PC-3 (cell line): ENCODE measurements at regions of chr14 and their contacts with region 1.

Region 1: GRCh38 chr14:36941783-36942521 is 230.5 kb downstream of the SLC25A21 start:
- DNase-seq: peak; percentile 88
- ATAC-seq: peak; percentile 57
- H3K4me3 ChIP-seq: no peak overlapping the region
- H3K27ac ChIP-seq: peak overlapping the region; percentile 89
- H3K4me1 ChIP-seq: peaks cover 40% of the 10 kb centered on the region
- H3K27me3 ChIP-seq: no peaks in the 10 kb centered on the region
- CTCF ChIP-seq: peak; percentile 97

Region 2: DNA sequence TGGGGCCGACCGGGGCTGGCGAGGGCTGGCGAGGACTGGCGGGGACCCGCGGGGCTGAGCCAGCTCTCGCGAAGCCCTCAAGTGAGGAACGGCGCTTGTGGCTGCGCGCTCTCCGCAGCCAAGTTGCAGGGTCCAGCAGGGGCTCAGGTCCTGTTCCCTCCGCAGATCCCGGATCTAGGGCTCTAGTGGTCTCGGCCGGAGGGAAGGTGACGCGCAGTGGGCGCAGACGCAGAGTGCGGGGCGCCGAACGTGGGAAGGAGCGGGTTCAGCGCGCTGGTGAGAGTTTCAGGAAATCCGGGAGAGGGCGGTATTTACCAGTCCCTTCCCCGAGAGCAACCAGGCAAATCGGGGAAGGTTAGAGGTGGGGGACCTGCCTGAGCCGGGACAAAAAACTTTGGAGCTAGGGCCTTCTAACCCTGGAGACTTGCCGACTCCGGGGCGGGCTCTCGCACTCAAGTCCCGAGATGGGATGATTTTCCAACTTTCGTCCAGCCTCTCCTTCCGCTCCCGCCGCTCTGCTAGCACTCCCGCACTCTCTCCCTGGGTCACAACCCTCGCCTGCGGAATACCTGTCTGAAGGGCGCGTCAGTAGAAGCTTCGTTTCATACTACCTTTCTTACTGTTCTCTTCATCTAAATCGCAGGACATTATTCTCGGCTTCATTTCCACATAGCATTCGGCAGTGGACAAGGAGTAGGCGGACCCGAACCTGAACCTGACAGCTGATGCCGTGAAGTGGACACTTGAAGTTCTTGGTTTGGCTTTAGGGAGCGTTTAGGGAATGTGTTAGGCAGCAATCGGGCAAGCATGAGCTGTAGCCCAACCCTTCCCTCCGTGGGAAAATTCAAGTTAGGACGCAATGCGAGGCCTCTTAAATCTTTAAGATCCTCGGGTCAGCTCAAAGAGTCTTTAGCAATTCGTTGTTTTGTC is 293.9 kb before region 1 on chr14:
- CTCF ChIA-PET with region 1: interaction called, 18 read pairs
- POLR2A ChIA-PET with region 1: no interaction called
- intact Hi-C with region 1: loop called (anchors 1 kb)
- DNase-seq: peak; percentile 73
- ATAC-seq: peak; percentile 93
- H3K4me3 ChIP-seq: peak overlapping the region; percentile 82
- H3K27ac ChIP-seq: no peak overlapping the region
- H3K4me1 ChIP-seq: peaks cover 15% of the 10 kb centered on the region
- H3K27me3 ChIP-seq: no peaks in the 10 kb centered on the region
- CTCF ChIP-seq: peak; percentile 86

Region 3: GRCh38 chr14:36773136-36773540 is 168.8 kb before region 1 on chr14:
- CTCF ChIA-PET with region 1: interaction called, 7 read pairs
- POLR2A ChIA-PET with region 1: no interaction called
- intact Hi-C with region 1: loop called (anchors 1 kb)
- DNase-seq: peak; percentile 76
- ATAC-seq: peak; percentile 94
- H3K4me3 ChIP-seq: no peak overlapping the region
- H3K27ac ChIP-seq: no peak overlapping the region
- H3K4me1 ChIP-seq: peaks cover 15% of the 10 kb centered on the region
- H3K27me3 ChIP-seq: no peaks in the 10 kb centered on the region
- CTCF ChIP-seq: peak; percentile 71

Region 4: GRCh38 chr14:36845356-36846012 is 96.5 kb before region 1 on chr14:
- CTCF ChIA-PET with region 1: no interaction called
- POLR2A ChIA-PET with region 1: no interaction called
- intact Hi-C with region 1: no loop called
- DNase-seq: peak; percentile 52
- ATAC-seq: peak; percentile 81
- H3K4me3 ChIP-seq: no peak overlapping the region
- H3K27ac ChIP-seq: no peak overlapping the region
- H3K4me1 ChIP-seq: peaks cover 18% of the 10 kb centered on the region
- H3K27me3 ChIP-seq: no peaks in the 10 kb centered on the region
- CTCF ChIP-seq: no peak

Region 5: DNA sequence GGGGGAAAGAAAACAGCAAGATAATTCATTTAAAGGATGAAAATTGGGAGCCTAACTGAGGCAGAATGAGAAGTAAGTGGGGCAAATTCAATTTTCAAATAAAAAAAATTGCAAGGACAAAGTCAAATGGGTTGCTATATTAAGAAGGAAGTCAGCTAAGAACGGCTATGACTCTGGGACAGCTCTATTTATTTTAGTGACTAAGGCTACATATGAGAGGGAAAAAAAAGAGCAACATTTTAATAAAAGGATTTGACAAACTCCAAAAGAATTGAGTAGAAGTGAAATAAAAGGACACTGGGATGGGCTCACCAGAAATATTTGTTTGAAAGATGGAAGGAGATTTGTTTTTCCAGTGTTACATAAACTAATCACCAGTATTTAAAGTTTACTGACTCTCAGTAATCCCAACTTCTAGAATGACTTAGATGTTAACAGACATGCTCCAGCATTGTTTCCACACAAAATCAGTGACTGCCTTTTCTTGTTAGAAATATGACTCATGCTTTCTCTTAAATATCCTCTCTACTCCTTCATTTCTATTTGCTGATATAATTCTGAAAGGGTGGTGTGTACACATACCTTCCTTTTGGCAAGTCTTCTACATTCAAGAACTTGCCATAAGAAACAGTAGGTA is 32.0 kb after region 1 on chr14:
- CTCF ChIA-PET with region 1: interaction called, 3 read pairs
- POLR2A ChIA-PET with region 1: no interaction called
- intact Hi-C with region 1: loop called (anchors 1 kb)
- DNase-seq: peak; percentile 85
- ATAC-seq: peak; percentile 84
- H3K4me3 ChIP-seq: peak overlapping the region; percentile 40
- H3K27ac ChIP-seq: peak overlapping the region; percentile 92
- H3K4me1 ChIP-seq: peaks cover 61% of the 10 kb centered on the region
- H3K27me3 ChIP-seq: no peaks in the 10 kb centered on the region
- CTCF ChIP-seq: no peak

Region 6: GRCh38 chr14:37081202-37081601 is 139.2 kb after region 1 on chr14:
- CTCF ChIA-PET with region 1: no interaction called
- POLR2A ChIA-PET with region 1: no interaction called
- intact Hi-C with region 1: no loop called
- DNase-seq: peak; percentile 93
- ATAC-seq: peak; percentile 94
- H3K4me3 ChIP-seq: no peak overlapping the region
- H3K27ac ChIP-seq: peak overlapping the region; percentile 17; the same call in 1 of the 2 replicates
- H3K4me1 ChIP-seq: peaks cover 12% of the 10 kb centered on the region
- H3K27me3 ChIP-seq: no peaks in the 10 kb centered on the region
- CTCF ChIP-seq: no peak

Region 7: GRCh38 chr14:37116933-37117849 is 175.2 kb after region 1 on chr14:
- CTCF ChIA-PET with region 1: interaction called, 29 read pairs
- POLR2A ChIA-PET with region 1: interaction called, 5 read pairs
- intact Hi-C with region 1: loop called (anchors 1 kb)
- DNase-seq: peak; percentile 95
- ATAC-seq: peak; percentile 61
- H3K4me3 ChIP-seq: peak overlapping the region; percentile 37
- H3K27ac ChIP-seq: peak overlapping the region; percentile 88
- H3K4me1 ChIP-seq: peaks cover 57% of the 10 kb centered on the region
- H3K27me3 ChIP-seq: no peaks in the 10 kb centered on the region
- CTCF ChIP-seq: peak; percentile 84

Region 8: GRCh38 chr14:37172024-37172869 is 230.3 kb after region 1 on chr14 and contains the start of gene SLC25A21:
- CTCF ChIA-PET with region 1: no interaction called
- POLR2A ChIA-PET with region 1: no interaction called
- intact Hi-C with region 1: no loop called
- DNase-seq: peak; percentile 87
- ATAC-seq: peak; percentile 94
- H3K4me3 ChIP-seq: peak within 1 kb of the TSS; percentile 82
- H3K27ac ChIP-seq: peak within 1 kb of the TSS; percentile 87
- H3K4me1 ChIP-seq: peaks cover 15% of the 10 kb centered on the region
- H3K27me3 ChIP-seq: no peaks in the 10 kb centered on the region
- CTCF ChIP-seq: 0 out of 2 replicates have a peak, but pooled peaks have one; percentile 29
- total RNA-seq, gene SLC25A21: 0.87 and 1.0 TPM in 2 replicates

Region 9: DNA sequence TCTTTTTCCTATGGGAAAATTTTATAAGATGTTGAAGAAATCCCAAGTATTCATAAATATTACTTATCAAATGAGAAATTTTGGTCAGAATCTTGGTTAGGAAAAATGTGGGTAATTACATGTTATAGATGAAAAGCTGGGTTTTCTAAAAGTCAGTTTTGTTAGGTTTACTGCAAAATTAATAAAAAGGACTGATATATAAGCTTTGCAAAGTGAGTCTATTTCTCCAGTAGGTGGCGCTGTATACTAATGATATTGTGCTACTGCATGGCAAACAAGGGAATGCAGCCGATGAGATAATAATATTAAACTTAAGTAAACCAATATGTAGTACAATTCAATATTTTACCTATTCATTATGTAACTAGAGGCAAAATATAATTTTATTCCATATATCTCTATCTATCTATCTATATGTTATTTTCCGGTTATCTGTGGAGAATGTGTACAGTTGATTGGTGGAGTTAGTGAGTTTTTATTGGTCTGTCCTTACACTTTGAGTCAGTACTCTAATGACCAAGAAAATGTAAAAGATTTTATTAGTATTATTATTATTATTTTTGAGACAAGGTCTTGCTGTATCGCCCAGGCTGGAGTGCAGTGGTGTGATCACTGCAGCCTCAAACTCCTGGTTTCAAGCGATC is 288.7 kb after region 1 on chr14:
- CTCF ChIA-PET with region 1: interaction called, 4 read pairs
- POLR2A ChIA-PET with region 1: no interaction called
- intact Hi-C with region 1: loop called (anchors 10 kb)
- DNase-seq: peak; percentile 89
- ATAC-seq: peak; percentile 80
- H3K4me3 ChIP-seq: no peak overlapping the region
- H3K27ac ChIP-seq: no peak overlapping the region
- H3K4me1 ChIP-seq: no peaks in the 10 kb centered on the region
- H3K27me3 ChIP-seq: no peaks in the 10 kb centered on the region
- CTCF ChIP-seq: peak; percentile 93

Region 10: GRCh38 chr14:37678916-37679315 is 737.0 kb after region 1 on chr14:
- CTCF ChIA-PET with region 1: no interaction called
- POLR2A ChIA-PET with region 1: no interaction called
- intact Hi-C with region 1: no loop called
- DNase-seq: no peak
- ATAC-seq: no peak
- H3K4me3 ChIP-seq: no peak overlapping the region
- H3K27ac ChIP-seq: no peak overlapping the region
- H3K4me1 ChIP-seq: no peaks in the 10 kb centered on the region
- H3K27me3 ChIP-seq: no peaks in the 10 kb centered on the region
- CTCF ChIP-seq: no peak